OCI-LY7 (cell line): ENCODE measurements at regions of chr1 and their contacts with region 1.

Region 1: GRCh38 chr1:11645670-11646265 is 8.5 kb downstream of the FBXO2 start:
- DNase-seq: peak; percentile 81
- H3K4me3 ChIP-seq: no peak overlapping the region
- H3K27ac ChIP-seq: no peak overlapping the region
- H3K4me1 ChIP-seq: peaks cover 19% of the 10 kb centered on the region
- CTCF ChIP-seq: peak; percentile 81

Region 2: GRCh38 chr1:11037740-11038182 is 608.0 kb before region 1 on chr1:
- CTCF ChIA-PET with region 1: interaction called, 4 read pairs
- POLR2A ChIA-PET with region 1: no interaction called
- intact Hi-C with region 1: loop called (anchors 2 kb)
- DNase-seq: peak; percentile 87
- H3K4me3 ChIP-seq: no peak overlapping the region
- H3K27ac ChIP-seq: no peak overlapping the region
- H3K4me1 ChIP-seq: peaks cover 4% of the 10 kb centered on the region
- CTCF ChIP-seq: peak; percentile 100

Region 3: DNA sequence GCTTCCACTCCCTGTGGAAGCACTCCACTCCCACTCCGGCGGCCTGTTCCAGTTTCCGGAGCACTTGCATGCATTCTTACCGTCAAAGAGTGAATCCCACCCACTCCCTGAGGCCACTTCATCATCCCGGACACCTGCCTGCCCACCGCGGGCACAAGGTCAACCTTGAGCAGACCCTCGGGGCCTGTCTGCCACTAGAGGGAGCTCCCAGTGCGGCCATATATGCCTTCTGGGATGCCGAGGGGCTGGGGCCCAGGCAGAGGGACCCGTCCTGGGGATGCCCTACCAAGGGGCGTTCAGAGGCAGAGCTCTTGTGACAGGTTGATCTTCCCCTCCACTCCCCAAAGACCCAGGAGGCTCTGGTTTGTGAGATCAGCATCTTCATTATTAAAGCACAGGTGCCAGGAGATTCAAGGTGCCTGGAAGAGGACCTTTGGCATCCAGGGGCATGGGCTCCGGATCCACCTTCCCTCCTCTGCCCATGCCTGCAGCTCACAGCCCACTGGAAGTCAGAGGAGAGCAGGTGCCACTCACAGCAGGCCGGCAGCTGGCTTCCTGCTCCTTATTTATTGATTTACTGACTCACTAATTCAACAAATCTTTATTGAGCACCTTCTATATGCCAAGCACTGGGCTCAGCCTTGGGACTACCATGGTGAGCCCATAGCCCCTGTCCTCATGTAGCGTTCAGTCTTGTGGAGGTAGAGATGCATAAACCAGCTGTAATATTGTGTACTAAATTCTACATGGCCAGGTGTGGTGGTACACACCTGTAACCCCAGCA is 325.4 kb before region 1 on chr1:
- CTCF ChIA-PET with region 1: no interaction called
- POLR2A ChIA-PET with region 1: no interaction called
- intact Hi-C with region 1: loop called (anchors 5 kb)
- DNase-seq: peak; percentile 58
- H3K4me3 ChIP-seq: no peak overlapping the region
- H3K27ac ChIP-seq: no peak overlapping the region
- H3K4me1 ChIP-seq: no peaks in the 10 kb centered on the region
- CTCF ChIP-seq: peak; percentile 89

Region 4: DNA sequence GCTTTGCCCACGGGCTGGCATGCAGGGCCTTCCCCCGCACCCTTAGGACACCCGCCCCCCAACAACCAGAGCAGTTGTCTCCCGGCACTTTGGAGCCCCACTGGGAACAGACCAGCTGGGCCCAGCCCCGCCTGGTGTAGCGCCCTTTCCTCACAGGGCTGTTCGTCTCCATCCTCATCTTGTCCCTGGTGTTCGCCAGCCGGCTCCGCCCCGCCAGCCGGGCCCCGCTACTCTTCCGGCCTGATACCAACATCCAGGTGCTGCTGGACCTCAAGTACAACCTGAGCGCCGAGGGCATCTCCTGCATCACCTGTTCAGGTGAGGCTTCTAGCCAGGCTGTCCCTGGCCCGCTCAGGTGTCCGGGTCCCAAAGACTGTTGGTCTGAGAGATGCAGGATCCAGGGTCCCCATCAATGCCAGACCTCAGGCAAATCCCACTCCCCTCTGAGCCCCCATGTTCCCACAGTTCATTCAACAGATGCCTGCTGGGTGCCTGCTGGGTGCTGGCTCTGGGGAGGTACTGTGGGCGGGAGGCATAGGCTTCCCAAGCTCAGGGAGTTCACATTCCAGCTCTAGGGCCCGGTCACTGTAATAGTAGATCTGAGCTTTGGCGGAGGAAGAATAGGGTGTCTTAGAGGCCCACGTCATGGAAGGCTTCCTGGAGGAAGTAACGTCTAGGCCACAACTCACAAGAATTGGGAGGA is 125.1 kb before region 1 on chr1:
- CTCF ChIA-PET with region 1: no interaction called
- POLR2A ChIA-PET with region 1: no interaction called
- intact Hi-C with region 1: no loop called
- DNase-seq: no peak
- H3K4me3 ChIP-seq: no peak overlapping the region
- H3K27ac ChIP-seq: no peak overlapping the region
- H3K4me1 ChIP-seq: no peaks in the 10 kb centered on the region
- CTCF ChIP-seq: no peak

Region 5: GRCh38 chr1:11563560-11564069 is 82.2 kb before region 1 on chr1:
- CTCF ChIA-PET with region 1: no interaction called
- POLR2A ChIA-PET with region 1: no interaction called
- intact Hi-C with region 1: loop called (anchors 10 kb)
- DNase-seq: peak; percentile 71
- H3K4me3 ChIP-seq: no peak overlapping the region
- H3K27ac ChIP-seq: no peak overlapping the region
- H3K4me1 ChIP-seq: peaks cover 24% of the 10 kb centered on the region
- CTCF ChIP-seq: no peak

Region 6: GRCh38 chr1:11634365-11635192 is 11.2 kb before region 1 on chr1:
- CTCF ChIA-PET with region 1: no interaction called
- POLR2A ChIA-PET with region 1: no interaction called
- intact Hi-C with region 1: no loop called
- DNase-seq: no peak
- H3K4me3 ChIP-seq: no peak overlapping the region
- H3K27ac ChIP-seq: no peak overlapping the region
- H3K4me1 ChIP-seq: no peaks in the 10 kb centered on the region
- CTCF ChIP-seq: no peak

Region 7: GRCh38 chr1:11898831-11899467 is 253.2 kb after region 1 on chr1:
- CTCF ChIA-PET with region 1: no interaction called
- POLR2A ChIA-PET with region 1: interaction called, 3 read pairs
- intact Hi-C with region 1: loop called (anchors 2 kb)
- DNase-seq: no peak
- H3K4me3 ChIP-seq: no peak overlapping the region
- H3K27ac ChIP-seq: no peak overlapping the region
- H3K4me1 ChIP-seq: peaks cover 10% of the 10 kb centered on the region
- CTCF ChIP-seq: no peak